ENCODE measurements at regions of chr17 and their contacts with region 1.

Region 1: DNA sequence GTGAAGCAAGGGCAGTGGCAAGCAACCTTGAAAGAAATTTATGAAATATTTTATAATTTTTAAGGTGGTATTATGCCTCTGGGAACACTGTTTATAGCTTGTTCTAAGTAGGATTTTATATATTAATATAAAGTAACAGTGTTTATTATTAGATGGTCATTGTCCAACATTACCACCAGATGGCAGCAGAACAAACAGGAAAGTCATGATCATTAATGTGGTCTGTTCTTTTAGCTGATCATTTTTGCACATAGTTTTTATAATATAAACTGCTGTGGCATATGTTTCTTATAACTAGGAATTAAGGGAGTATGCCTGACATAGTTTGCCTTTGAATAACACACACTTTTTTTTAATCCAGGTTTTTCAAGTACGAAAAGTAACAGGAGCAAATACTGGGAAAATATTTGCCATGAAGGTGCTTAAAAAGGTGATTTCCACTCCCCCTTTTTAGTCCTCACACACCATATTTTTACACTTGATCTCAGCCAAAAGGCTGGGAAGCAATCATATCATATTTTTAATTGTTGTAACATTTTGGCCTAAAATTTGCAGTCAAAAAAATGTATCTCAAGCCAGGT is 21.4 kb downstream of the RPS6KB1 start:
- DNase-seq: no peak
- ATAC-seq: peak; percentile 64
- H3K4me3 Mint-ChIP-seq: no peak overlapping the region
- H3K27ac Mint-ChIP-seq: no peak overlapping the region
- H3K4me1 Mint-ChIP-seq: no peaks in the 10 kb centered on the region
- H3K27me3 Mint-ChIP-seq: no peaks in the 10 kb centered on the region

Region 2: DNA sequence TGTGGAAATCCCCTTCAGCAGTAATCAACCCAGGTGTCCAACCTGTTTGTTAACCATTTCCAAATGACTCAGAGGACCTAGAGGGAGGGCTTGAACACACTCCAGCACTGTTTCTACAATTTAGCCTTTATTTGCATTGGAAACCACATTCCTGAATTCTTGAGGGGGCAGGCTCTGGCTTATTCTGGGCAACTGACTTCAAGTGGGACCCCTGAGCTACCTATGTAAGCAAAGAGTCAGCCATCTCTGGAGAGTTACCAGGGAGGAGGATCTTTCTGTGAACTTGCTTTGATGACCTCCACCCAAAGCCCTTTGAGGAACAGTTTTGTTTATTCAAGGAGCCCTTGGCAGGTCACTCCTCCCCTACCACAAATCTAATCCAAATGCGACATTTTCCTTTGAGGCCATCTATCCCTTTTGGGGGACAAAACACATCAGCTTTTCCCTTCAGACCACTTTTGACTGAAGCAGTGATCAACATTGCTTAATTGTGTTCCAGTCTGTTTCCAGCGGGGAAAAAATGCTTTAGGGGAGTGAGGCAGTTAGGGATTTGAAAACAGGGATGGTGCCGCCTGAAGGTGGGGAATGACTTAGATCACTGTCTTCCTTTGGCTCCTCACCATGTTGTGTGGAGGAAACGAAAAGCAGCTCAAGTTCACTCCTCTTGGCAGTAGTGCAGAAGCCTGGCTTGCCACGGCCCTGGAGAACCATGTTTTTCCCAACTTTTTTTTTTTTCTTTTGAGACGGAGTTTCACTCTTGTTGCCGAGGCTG is 67.8 kb before region 1 on chr17:
- CTCF ChIA-PET with region 1: no interaction called
- DNase-seq: no peak
- ATAC-seq: peak; percentile 29
- H3K4me3 Mint-ChIP-seq: peak overlapping the region; percentile 13
- H3K27ac Mint-ChIP-seq: peak overlapping the region; percentile 100
- H3K4me1 Mint-ChIP-seq: peaks cover 70% of the 10 kb centered on the region
- H3K27me3 Mint-ChIP-seq: no peaks in the 10 kb centered on the region

Region 3: GRCh38 chr17:59892924-59893676 is 21.3 kb before region 1 on chr17 and contains the starts of genes RPS6KB1 and TUBD1:
- CTCF ChIA-PET with region 1: interaction called, 19 read pairs
- DNase-seq: peak; percentile 99
- ATAC-seq: peak; percentile 95
- H3K4me3 Mint-ChIP-seq: peak within 1 kb of the TSS; percentile 94
- H3K27ac Mint-ChIP-seq: peak within 1 kb of the TSS; percentile 92
- H3K4me1 Mint-ChIP-seq: peaks cover 57% of the 10 kb centered on the region
- H3K27me3 Mint-ChIP-seq: no peaks in the 10 kb centered on the region
- total RNA-seq, gene RPS6KB1: 52.3 to 58.6 TPM
- total RNA-seq, gene TUBD1: 14.3 to 15.5 TPM

Region 4: GRCh38 chr17:59964482-59965328 is 50.3 kb after region 1 on chr17 and contains the start of gene RNFT1:
- CTCF ChIA-PET with region 1: interaction called, 10 read pairs
- DNase-seq: peak; percentile 91
- ATAC-seq: peak; percentile 93
- H3K4me3 Mint-ChIP-seq: peak within 1 kb of the TSS; percentile 80
- H3K27ac Mint-ChIP-seq: peak within 1 kb of the TSS; percentile 92
- H3K4me1 Mint-ChIP-seq: peaks cover 19% of the 10 kb centered on the region
- H3K27me3 Mint-ChIP-seq: no peaks in the 10 kb centered on the region
- total RNA-seq, gene RNFT1: 16.7 to 17.1 TPM

Region 5: GRCh38 chr17:60006124-60006523 is 91.8 kb after region 1 on chr17:
- CTCF ChIA-PET with region 1: no interaction called
- DNase-seq: no peak
- ATAC-seq: no peak
- H3K4me3 Mint-ChIP-seq: no peak overlapping the region
- H3K27ac Mint-ChIP-seq: no peak overlapping the region
- H3K4me1 Mint-ChIP-seq: no peaks in the 10 kb centered on the region
- H3K27me3 Mint-ChIP-seq: no peaks in the 10 kb centered on the region